ENCODE measurements at regions of chr15 and their contacts with region 1.

Region 1: GRCh38 chr15:77496710-77497103 is 76.0 kb downstream of the HMG20A start:
- DNase-seq: peak; percentile 84
- ATAC-seq: peak; percentile 78
- H3K4me3 Mint-ChIP-seq: no peak overlapping the region
- H3K27ac Mint-ChIP-seq: no peak overlapping the region
- H3K4me1 Mint-ChIP-seq: peaks cover 21% of the 10 kb centered on the region
- H3K27me3 Mint-ChIP-seq: no peaks in the 10 kb centered on the region
- CTCF ChIP-seq: peak; percentile 93

Region 2: DNA sequence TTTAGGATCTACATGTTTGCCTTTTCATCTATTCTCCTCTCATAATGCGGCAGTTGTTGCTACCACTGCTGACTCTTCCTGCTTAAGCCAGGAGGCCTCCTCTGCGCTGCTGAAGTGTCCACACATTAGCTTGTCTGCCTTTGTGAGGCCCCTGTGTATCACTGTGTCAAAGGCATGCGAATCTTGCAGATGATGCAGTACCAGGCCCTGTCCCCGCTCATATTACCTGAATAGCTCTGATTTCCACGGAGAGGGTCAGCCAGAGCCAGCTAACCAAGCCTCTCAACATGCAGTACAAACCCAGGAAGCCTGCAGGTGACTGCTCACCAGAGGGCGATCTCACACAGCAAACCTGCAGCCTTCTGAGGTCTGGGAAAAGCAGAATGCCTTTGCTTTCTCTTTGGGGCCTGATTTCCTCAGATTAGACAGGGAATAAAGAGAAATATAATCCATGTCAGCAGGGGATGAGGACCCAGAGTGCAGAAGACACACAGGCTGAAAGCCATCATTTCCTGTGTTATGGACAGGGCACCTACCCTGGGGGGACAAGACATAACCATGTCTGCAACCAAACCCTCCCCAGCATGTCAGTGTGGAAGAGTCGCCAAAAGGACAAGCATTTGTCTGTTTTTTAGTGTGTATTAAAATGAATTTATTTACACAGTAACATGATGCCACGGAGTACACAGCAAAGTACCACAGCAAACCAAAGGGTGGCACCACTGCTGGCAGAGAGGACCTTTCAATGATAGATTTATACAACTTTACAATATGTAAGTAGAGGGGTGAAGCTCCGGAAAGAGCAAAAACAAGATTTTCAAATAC is 389.0 kb before region 1 on chr15:
- CTCF ChIA-PET with region 1: interaction called, 12 read pairs
- POLR2A ChIA-PET with region 1: no interaction called
- intact Hi-C with region 1: no loop called
- DNase-seq: peak; percentile 65
- ATAC-seq: peak; percentile 65
- H3K4me3 Mint-ChIP-seq: no peak overlapping the region
- H3K27ac Mint-ChIP-seq: no peak overlapping the region
- H3K4me1 Mint-ChIP-seq: no peaks in the 10 kb centered on the region
- H3K27me3 Mint-ChIP-seq: no peaks in the 10 kb centered on the region
- CTCF ChIP-seq: peak; percentile 65

Region 3: DNA sequence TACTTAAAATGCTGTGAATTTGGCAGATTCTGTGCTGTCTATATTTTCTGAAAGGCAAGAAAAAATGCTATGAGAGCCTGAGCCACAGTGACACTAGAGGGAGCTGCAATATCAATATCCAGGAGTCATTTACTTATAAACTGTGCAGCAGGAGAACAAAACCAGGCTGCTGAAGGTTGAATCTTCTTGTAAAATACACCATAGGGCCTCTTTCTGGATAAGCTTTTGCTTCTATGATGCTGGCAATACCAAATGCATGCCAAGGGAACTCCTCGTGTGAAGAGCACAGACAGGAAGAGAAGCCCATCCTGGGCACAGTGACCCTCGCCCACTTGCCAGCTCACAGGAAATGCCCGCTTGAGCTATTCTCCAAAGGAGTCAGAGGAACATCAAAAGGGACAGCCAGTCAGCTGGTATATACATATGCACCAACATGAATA is 377.8 kb before region 1 on chr15:
- CTCF ChIA-PET with region 1: interaction called, 58 read pairs
- POLR2A ChIA-PET with region 1: no interaction called
- intact Hi-C with region 1: loop called (anchors 5 kb)
- DNase-seq: peak; percentile 61
- ATAC-seq: peak; percentile 67
- H3K4me3 Mint-ChIP-seq: no peak overlapping the region
- H3K27ac Mint-ChIP-seq: no peak overlapping the region
- H3K4me1 Mint-ChIP-seq: peaks cover 12% of the 10 kb centered on the region
- H3K27me3 Mint-ChIP-seq: no peaks in the 10 kb centered on the region
- CTCF ChIP-seq: peak; percentile 83

Region 4: DNA sequence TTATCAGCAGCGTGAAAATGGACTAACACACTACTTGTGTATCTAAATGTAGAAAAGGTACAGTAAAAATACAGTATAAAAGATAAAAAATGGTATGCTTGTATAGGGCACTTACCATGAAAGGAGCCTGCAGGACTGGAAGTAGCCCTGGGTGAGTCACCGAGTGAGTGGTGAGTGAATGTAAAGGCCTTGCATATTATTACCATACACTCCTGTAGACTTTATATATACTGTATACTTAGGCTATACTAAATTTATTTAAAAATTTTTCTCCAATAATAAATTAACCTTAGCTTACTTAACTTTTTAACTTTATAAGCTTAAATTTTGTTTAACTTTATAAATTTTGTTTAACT is 358.6 kb before region 1 on chr15:
- CTCF ChIA-PET with region 1: no interaction called
- POLR2A ChIA-PET with region 1: no interaction called
- intact Hi-C with region 1: no loop called
- DNase-seq: no peak
- ATAC-seq: no peak
- H3K4me3 Mint-ChIP-seq: no peak overlapping the region
- H3K27ac Mint-ChIP-seq: no peak overlapping the region
- H3K4me1 Mint-ChIP-seq: no peaks in the 10 kb centered on the region
- H3K27me3 Mint-ChIP-seq: no peaks in the 10 kb centered on the region
- CTCF ChIP-seq: no peak

Region 5: GRCh38 chr15:77186594-77187011 is 310.1 kb before region 1 on chr15:
- CTCF ChIA-PET with region 1: interaction called, 57 read pairs
- POLR2A ChIA-PET with region 1: no interaction called
- intact Hi-C with region 1: loop called (anchors 2 kb)
- DNase-seq: peak; percentile 33
- ATAC-seq: peak; percentile 29
- H3K4me3 Mint-ChIP-seq: no peak overlapping the region
- H3K27ac Mint-ChIP-seq: peak overlapping the region; percentile 79
- H3K4me1 Mint-ChIP-seq: peaks cover 62% of the 10 kb centered on the region
- H3K27me3 Mint-ChIP-seq: no peaks in the 10 kb centered on the region
- CTCF ChIP-seq: peak; percentile 70

Region 6: GRCh38 chr15:77475898-77476297 is 20.8 kb before region 1 on chr15:
- CTCF ChIA-PET with region 1: interaction called, 11 read pairs
- POLR2A ChIA-PET with region 1: no interaction called
- intact Hi-C with region 1: no loop called
- DNase-seq: no peak
- ATAC-seq: no peak
- H3K4me3 Mint-ChIP-seq: no peak overlapping the region
- H3K27ac Mint-ChIP-seq: no peak overlapping the region
- H3K4me1 Mint-ChIP-seq: peaks cover 3% of the 10 kb centered on the region
- H3K27me3 Mint-ChIP-seq: no peaks in the 10 kb centered on the region
- CTCF ChIP-seq: no peak

Region 7: GRCh38 chr15:77507911-77508310 is 11.2 kb after region 1 on chr15:
- CTCF ChIA-PET with region 1: interaction called, 20 read pairs
- POLR2A ChIA-PET with region 1: interaction called, 3 read pairs
- intact Hi-C with region 1: no loop called
- DNase-seq: no peak
- ATAC-seq: no peak
- H3K4me3 Mint-ChIP-seq: no peak overlapping the region
- H3K27ac Mint-ChIP-seq: no peak overlapping the region
- H3K4me1 Mint-ChIP-seq: peaks cover 10% of the 10 kb centered on the region
- H3K27me3 Mint-ChIP-seq: no peaks in the 10 kb centered on the region
- CTCF ChIP-seq: no peak

Region 8: DNA sequence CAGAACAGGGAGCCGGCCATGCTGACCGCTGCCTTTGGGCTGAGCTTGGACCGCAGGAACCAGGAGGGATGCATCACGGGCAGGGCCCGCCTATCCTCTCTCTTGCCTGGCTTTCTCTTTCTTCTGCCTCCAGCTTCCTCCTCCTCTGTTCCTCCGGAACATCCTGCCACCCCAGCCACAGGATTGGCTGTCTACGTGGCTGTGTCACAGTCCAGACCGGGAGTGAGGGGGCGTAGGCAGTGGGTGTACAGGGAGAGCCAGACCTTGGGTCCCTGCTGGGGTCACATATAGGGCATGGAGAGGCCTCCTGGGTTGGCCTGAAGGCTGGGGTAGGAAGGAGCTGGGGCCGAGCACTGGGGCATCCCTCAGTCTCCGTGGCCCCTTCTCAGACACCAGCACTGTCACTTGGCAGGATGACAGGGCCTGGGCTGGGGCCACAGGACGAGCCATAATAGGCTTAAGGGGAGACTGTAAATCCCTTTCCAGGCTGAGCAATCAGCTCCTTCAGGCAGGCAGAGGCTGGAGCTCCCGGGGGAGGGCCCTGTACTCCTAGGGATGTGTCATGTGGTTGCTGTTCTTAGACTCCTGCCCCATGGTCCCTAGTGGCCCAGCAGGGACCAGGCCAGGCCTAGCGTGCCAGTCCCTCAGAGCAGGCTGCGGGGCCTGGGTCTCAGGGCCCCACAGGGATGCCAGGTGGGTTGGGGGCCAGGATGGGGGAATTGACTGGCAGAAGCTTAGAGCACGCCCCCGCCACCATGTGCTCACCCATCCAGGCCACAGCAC is 110.6 kb after region 1 on chr15:
- CTCF ChIA-PET with region 1: no interaction called
- POLR2A ChIA-PET with region 1: no interaction called
- intact Hi-C with region 1: no loop called
- DNase-seq: no peak
- ATAC-seq: no peak
- H3K4me3 Mint-ChIP-seq: no peak overlapping the region
- H3K27ac Mint-ChIP-seq: no peak overlapping the region
- H3K4me1 Mint-ChIP-seq: peaks cover 6% of the 10 kb centered on the region
- H3K27me3 Mint-ChIP-seq: peaks cover 7% of the 10 kb centered on the region
- CTCF ChIP-seq: no peak

Region 9: DNA sequence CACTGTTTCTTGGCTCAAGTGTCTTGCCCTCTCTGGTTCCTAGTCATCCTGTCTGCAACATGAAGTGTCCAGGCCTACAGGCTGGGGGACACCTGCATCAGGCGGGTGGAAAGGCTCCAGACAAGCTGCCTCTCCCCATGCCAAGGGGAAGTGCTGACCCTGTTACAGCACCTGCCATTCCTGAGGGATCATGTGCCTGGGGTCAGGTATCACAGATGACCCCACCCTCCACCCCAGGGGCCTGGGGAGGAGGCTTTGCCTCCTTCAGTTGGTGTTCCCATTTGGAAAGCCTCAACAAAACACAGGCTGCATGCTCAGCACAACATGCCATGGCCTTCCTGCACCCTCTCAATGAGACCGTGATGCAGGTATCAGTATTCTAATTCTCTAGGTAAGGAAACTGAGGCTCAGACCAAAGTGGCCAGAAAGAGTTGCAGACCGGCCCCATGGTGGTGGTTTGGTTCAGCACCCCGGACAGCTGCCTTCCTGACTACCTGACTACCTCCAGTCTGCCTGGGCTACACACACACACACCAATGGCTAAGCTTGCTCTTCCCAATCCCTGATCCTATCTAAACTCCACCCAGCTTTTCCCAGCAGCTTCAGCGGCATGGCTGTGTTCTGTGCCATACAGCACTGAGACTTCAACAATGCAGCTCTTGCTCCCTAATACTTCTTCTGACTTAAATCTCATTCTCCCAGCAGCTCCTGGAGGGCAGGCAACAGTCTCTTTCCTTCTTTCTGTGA is 205.7 kb after region 1 on chr15:
- CTCF ChIA-PET with region 1: no interaction called
- POLR2A ChIA-PET with region 1: no interaction called
- intact Hi-C with region 1: no loop called
- DNase-seq: peak; percentile 49
- ATAC-seq: no peak
- H3K4me3 Mint-ChIP-seq: no peak overlapping the region
- H3K27ac Mint-ChIP-seq: no peak overlapping the region
- H3K4me1 Mint-ChIP-seq: no peaks in the 10 kb centered on the region
- H3K27me3 Mint-ChIP-seq: peaks cover 4% of the 10 kb centered on the region
- CTCF ChIP-seq: no peak

Region 10: GRCh38 chr15:77717333-77717990 is 220.8 kb after region 1 on chr15:
- CTCF ChIA-PET with region 1: no interaction called
- POLR2A ChIA-PET with region 1: no interaction called
- intact Hi-C with region 1: no loop called
- DNase-seq: no peak
- ATAC-seq: no peak
- H3K4me3 Mint-ChIP-seq: no peak overlapping the region
- H3K27ac Mint-ChIP-seq: no peak overlapping the region
- H3K4me1 Mint-ChIP-seq: no peaks in the 10 kb centered on the region
- H3K27me3 Mint-ChIP-seq: peaks cover 5% of the 10 kb centered on the region
- CTCF ChIP-seq: no peak

Measured in activated CD8-positive, alpha-beta T cell treated with anti-CD3 and anti-CD28 coated beads for 36 hours (primary cell).